Naive thymus-derived CD4-positive, alpha-beta T cell (primary cell): ENCODE measurements at regions of chr10 and their contacts with region 1.

Region 1: GRCh38 chr10:61992671-61993668 is 91.5 kb downstream of the ARID5B start:
- DNase-seq: peak in 8 of 9 donors; percentile 39 to 85 (median 72)
- ATAC-seq: peak; percentile 90
- H3K4me3 ChIP-seq: peak overlapping the region; percentile 28
- H3K4me3 Mint-ChIP-seq: peak overlapping the region in 9 of 10 donors; percentile 61 to 89 (median 64)
- H3K27ac ChIP-seq: peak overlapping the region; percentile 63
- H3K27ac Mint-ChIP-seq: peak overlapping the region; percentile 82 to 96 (median 93)
- H3K4me1 ChIP-seq: peaks cover 33 to 37% of the 10 kb centered on the region in 2 donors
- H3K4me1 Mint-ChIP-seq: peaks cover 28 to 81% (median 70%) of the 10 kb centered on the region in 7 donors
- H3K27me3 ChIP-seq: no peaks in the 10 kb centered on the region
- H3K27me3 Mint-ChIP-seq: no peaks in the 10 kb centered on the region

Region 2: DNA sequence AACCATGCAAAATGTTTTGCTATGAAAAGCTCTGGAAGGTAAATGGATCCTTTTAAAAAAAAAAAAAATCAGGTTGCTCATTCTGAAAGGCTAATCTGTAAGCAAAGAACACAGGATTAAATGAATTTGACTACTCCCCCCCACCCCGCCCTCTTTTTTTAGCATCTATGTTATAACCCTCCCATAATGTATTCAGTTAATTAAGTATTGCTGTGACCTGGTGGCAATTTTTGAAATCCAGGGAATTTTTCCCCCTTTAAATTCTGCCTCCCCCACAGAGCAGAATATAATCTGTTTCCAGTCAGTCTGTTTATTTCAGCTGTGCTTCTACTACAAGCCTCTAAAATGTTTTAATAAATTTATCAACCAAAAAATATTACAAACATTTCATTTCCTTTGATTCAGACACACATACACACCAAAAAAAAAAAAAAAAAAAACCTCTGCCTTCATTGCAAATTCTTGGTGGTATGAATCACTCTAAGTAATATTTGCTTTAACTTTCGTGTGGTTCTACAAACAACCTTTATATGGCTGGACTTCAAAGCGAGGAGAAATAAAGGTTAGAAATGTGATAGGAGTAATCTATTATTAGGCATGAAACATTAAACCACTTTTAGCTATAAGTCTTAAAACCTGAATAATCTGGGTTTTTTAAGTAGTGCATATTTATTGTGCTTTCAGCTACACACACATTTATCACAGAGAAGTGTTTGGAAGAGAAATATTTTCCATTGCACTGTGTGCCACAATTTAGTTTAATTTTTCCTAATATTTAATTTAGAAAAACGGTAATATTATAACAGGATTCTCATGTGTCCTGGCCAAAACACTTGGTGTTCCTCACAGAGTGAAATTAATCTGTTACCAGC is 155.8 kb before region 1 on chr10:
- CTCF ChIA-PET with region 1: no interaction called
- POLR2A ChIA-PET with region 1: no interaction called
- intact Hi-C with region 1: no loop called
- DNase-seq: no peak
- ATAC-seq: no peak
- H3K4me3 ChIP-seq: no peak overlapping the region
- H3K4me3 Mint-ChIP-seq: no peak overlapping the region
- H3K27ac ChIP-seq: no peak overlapping the region
- H3K27ac Mint-ChIP-seq: no peak overlapping the region
- H3K4me1 ChIP-seq: no peaks in the 10 kb centered on the region
- H3K4me1 Mint-ChIP-seq: peaks cover 0 to 15% (median 5%) of the 10 kb centered on the region in 7 donors
- H3K27me3 ChIP-seq: no peaks in the 10 kb centered on the region
- H3K27me3 Mint-ChIP-seq: peaks cover 0 to 4% (median 0%) of the 10 kb centered on the region in 5 donors

Region 3: GRCh38 chr10:61943674-61944410 is 49.1 kb before region 1 on chr10:
- CTCF ChIA-PET with region 1: no interaction called
- POLR2A ChIA-PET with region 1: no interaction called
- intact Hi-C with region 1: loop called (anchors 1 to 2 kb)
- DNase-seq: peak in 7 of 9 donors; percentile 25 to 58 (median 36)
- ATAC-seq: peak; percentile 65
- H3K4me3 ChIP-seq: peak overlapping the region; percentile 15
- H3K4me3 Mint-ChIP-seq: peak overlapping the region; percentile 60 to 86 (median 69)
- H3K27ac ChIP-seq: peak overlapping the region; percentile 58
- H3K27ac Mint-ChIP-seq: peak overlapping the region; percentile 47 to 94 (median 88)
- H3K4me1 ChIP-seq: peaks cover 28 to 46% of the 10 kb centered on the region in 2 donors
- H3K4me1 Mint-ChIP-seq: peaks cover 29 to 55% (median 51%) of the 10 kb centered on the region in 7 donors
- H3K27me3 ChIP-seq: no peaks in the 10 kb centered on the region
- H3K27me3 Mint-ChIP-seq: no peaks in the 10 kb centered on the region

Region 4: DNA sequence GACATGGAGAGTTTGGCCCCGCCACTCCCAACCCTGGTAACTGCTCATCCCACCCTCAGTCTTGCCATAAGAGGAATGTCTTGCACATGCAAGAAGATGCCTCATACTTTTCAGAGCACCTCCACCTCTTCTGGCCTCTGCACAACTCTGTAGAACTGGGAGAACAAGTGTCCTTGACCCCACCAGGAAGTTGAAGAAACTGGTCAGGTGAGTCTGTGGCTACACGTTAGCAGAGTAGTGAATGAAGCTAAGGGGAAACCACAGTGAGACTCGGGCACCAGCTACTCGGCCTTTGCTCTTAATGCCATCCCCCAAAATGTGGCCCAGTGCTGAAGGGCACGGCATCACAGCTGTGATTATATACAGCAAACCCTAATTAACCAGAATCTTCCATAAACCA is 18.6 kb after region 1 on chr10:
- CTCF ChIA-PET with region 1: no interaction called
- POLR2A ChIA-PET with region 1: interaction called, 5 read pairs
- intact Hi-C with region 1: loop called in 1 of 2 experiments (anchors 2 kb)
- DNase-seq: no peak
- ATAC-seq: no peak
- H3K4me3 ChIP-seq: no peak overlapping the region
- H3K4me3 Mint-ChIP-seq: no peak overlapping the region
- H3K27ac ChIP-seq: no peak overlapping the region
- H3K27ac Mint-ChIP-seq: peak overlapping the region in 2 of 9 donors; percentile 12 to 52
- H3K4me1 ChIP-seq: no peaks in the 10 kb centered on the region
- H3K4me1 Mint-ChIP-seq: peaks cover 12 to 59% (median 30%) of the 10 kb centered on the region in 7 donors
- H3K27me3 ChIP-seq: no peaks in the 10 kb centered on the region
- H3K27me3 Mint-ChIP-seq: no peaks in the 10 kb centered on the region

Region 5: GRCh38 chr10:62082729-62083411 is 89.9 kb after region 1 on chr10:
- CTCF ChIA-PET with region 1: no interaction called
- POLR2A ChIA-PET with region 1: no interaction called
- intact Hi-C with region 1: loop called in 1 of 2 experiments (anchors 1 kb)
- DNase-seq: peak in 7 of 9 donors; percentile 23 to 70 (median 53)
- ATAC-seq: peak; percentile 83
- H3K4me3 ChIP-seq: peak overlapping the region; percentile 35
- H3K4me3 Mint-ChIP-seq: peak overlapping the region; percentile 46 to 79 (median 72)
- H3K27ac ChIP-seq: peak overlapping the region; percentile 63
- H3K27ac Mint-ChIP-seq: peak overlapping the region; percentile 69 to 92 (median 87)
- H3K4me1 ChIP-seq: peaks cover 23 to 41% of the 10 kb centered on the region in 2 donors
- H3K4me1 Mint-ChIP-seq: peaks cover 28 to 72% (median 58%) of the 10 kb centered on the region in 7 donors
- H3K27me3 ChIP-seq: no peaks in the 10 kb centered on the region
- H3K27me3 Mint-ChIP-seq: no peaks in the 10 kb centered on the region